ENCODE measurements at regions of chr14 and their contacts with region 1.

Region 1: DNA sequence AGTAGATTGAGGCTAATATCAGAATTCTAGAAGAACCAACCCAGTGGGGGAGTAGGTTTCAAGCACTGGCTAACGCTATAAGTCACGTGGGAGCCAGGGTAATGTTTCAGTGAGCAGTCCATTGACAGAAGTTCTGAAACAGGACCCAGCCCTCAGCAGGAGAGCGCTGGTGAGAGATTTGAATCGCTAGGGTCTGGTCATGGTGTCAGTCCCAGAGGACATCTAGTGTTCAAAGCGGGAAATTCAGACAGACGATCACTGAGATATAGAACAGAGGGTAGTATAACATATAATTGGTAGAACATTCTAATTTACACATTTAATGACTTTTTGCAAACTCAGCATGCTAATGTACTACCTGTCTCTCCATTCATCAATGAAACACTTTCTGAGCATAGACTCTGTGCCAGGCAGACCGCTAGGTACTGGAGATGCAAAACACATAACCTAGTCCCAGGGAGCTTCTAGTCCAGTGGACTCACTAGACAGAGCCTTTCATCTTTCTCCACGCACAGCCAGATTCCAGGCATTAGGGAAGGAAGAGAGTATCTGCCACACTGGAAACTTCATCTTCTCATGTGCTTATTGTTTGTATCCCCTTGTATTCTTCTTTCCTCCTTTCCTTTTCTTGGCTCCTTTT is 35.4 kb upstream of the RNASE3 start:
- DNase-seq: peak; percentile 76
- H3K27ac ChIP-seq: no peak overlapping the region
- CTCF ChIP-seq: peak; percentile 73

Region 2: DNA sequence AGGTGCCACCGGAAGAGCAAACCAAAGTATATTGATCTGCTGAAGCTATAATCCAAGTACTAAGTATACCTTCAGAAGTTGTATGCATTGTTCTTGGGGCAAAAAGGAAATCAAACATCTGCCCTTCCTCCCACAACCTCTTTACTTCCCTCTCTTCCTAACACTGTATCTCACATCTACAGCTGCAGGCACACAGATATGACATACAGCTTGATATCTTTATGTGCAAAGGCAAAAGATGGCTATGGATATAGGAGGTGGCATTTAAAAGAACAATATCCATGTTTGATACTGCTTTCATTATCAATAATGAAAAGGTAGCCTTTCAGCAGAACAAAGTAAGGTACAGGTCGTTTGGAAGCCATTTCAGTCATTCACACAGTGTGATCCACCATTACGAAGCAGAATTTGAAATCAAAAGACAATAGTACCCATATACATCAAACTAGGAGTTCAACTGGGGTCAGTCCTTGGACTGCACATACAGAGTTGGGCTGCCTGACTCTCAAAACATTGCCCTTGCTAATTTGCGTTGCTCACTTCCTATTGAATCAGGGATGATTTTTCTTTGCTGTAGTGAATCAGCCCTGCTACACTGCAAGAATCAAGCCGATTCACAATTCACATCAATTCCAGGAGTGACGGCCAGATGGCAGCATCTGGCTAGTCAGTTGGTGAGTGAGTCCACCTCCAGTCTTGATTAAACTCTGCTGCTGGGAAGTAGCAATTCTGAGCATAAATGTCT is 158.3 kb before region 1 on chr14:
- CTCF ChIA-PET with region 1: interaction called, 11 read pairs
- POLR2A ChIA-PET with region 1: no interaction called
- DNase-seq: no peak
- H3K27ac ChIP-seq: no peak overlapping the region
- CTCF ChIP-seq: peak; percentile 78

Region 3: DNA sequence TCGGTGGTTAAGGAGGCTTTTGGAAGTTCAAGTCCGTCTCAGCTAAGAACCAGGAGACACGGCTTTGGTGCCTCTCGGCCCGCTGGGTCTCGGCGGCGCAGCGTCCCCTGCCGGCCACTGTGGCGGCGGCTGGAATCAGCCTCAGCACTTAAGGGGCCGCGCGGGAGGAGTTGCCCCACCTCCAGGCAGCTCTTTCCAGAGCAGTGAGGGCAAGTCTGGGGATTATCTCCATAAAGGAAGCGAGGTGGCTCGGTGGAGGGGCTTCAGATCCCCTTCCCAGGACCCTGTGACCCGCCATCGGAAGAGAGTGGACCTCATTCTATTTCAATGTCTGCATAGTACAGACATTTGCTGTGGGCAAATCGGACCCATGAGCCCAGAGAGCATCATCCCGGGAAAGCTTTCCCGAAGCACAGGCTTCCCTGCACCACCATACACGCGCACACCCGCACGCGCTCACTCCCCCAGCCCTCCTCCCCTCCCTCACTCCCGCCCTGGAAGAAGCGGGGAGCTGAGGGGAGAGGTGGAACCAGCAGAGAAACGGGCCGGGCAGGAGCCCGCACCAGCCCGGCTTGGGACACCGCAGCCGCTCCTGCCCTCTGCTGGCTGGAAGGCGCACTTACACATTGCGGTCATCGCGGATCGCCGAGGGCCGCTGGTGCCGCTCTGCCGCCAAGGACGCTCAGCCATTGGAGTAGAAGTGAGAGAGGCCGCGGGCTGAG is 115.4 kb after region 1 on chr14:
- CTCF ChIA-PET with region 1: interaction called, 19 read pairs
- POLR2A ChIA-PET with region 1: interaction called, 3 read pairs
- DNase-seq: peak; percentile 72
- H3K27ac ChIP-seq: peak overlapping the region; percentile 44
- CTCF ChIP-seq: peak; percentile 93

Measured in RWPE1 (cell line).